ENCODE measurements at regions of chr1 and their contacts with region 1.

Region 1: DNA sequence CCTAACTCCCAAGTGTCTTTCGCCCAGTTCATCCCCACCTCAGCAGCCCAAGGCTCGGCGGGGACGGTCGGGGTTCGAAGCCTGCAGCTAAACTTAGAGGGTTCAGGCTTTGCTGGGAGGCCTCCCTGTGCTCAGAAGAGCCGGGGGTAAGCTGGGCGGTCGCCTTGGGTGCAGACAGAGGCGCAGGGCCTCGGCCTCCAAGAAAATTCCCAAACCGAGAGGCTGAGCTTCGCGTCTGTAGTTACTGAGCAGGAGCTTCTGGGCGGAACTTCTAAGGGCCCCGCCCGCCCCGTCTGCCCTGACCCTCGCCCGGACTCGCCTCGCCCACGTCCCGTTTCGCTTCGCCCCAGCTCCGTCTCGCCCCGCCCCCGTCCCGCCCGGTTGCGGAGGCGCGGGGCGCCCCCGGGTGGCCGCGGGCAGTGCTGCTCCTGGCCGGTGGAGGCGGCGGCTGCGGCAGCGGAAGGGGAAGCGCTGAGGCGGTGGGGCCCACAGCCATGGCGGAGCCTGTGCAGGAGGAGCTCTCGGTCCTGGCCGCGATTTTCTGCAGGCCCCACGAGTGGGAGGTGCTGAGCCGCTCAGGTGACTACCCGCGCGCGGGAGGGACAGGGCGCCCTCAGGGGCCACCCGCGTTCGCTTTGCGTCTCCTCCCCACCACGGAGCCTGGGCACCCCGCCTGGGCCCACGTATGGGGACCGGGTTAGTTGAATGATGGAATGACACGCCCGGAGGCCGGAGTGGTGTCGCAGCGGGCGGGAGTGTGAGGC is at the start of gene RWDD3:
- DNase-seq: peak; percentile 88 to 93 (median 91)
- H3K4me3 ChIP-seq: peak within 1 kb of the TSS; percentile 82
- H3K4me3 Mint-ChIP-seq: peak within 1 kb of the TSS; percentile 87 to 96 (median 89)
- H3K27ac ChIP-seq: peak within 1 kb of the TSS; percentile 68
- H3K27ac Mint-ChIP-seq: peak within 1 kb of the TSS; percentile 62 to 98 (median 89)
- H3K4me1 ChIP-seq: peaks cover 23% of the 10 kb centered on the region
- H3K4me1 Mint-ChIP-seq: peaks cover 37 to 52% (median 51%) of the 10 kb centered on the region in 3 donors
- H3K27me3 ChIP-seq: no peaks in the 10 kb centered on the region
- H3K27me3 Mint-ChIP-seq: peaks cover 0 to 23% of the 10 kb centered on the region in 2 donors
- total RNA-seq, gene RWDD3: 11.2 to 13.0 TPM

Region 2: GRCh38 chr1:95072532-95073419 is 161.1 kb before region 1 on chr1 and contains the start of gene ALG14:
- CTCF ChIA-PET with region 1: interaction called, 7 read pairs
- POLR2A ChIA-PET with region 1: interaction called, 16 read pairs
- DNase-seq: peak; percentile 88 to 95 (median 93)
- H3K4me3 ChIP-seq: peak within 1 kb of the TSS; percentile 88
- H3K4me3 Mint-ChIP-seq: peak within 1 kb of the TSS; percentile 92 to 100 (median 98)
- H3K27ac ChIP-seq: peak within 1 kb of the TSS; percentile 71
- H3K27ac Mint-ChIP-seq: peak within 1 kb of the TSS; percentile 92 to 99 (median 98)
- H3K4me1 ChIP-seq: peaks cover 16% of the 10 kb centered on the region
- H3K4me1 Mint-ChIP-seq: peaks cover 18 to 25% (median 23%) of the 10 kb centered on the region in 3 donors
- H3K27me3 ChIP-seq: no peaks in the 10 kb centered on the region
- H3K27me3 Mint-ChIP-seq: peaks cover 7 to 11% of the 10 kb centered on the region in 2 donors
- total RNA-seq, gene ALG14: 4.4 to 4.6 TPM

Region 3: DNA sequence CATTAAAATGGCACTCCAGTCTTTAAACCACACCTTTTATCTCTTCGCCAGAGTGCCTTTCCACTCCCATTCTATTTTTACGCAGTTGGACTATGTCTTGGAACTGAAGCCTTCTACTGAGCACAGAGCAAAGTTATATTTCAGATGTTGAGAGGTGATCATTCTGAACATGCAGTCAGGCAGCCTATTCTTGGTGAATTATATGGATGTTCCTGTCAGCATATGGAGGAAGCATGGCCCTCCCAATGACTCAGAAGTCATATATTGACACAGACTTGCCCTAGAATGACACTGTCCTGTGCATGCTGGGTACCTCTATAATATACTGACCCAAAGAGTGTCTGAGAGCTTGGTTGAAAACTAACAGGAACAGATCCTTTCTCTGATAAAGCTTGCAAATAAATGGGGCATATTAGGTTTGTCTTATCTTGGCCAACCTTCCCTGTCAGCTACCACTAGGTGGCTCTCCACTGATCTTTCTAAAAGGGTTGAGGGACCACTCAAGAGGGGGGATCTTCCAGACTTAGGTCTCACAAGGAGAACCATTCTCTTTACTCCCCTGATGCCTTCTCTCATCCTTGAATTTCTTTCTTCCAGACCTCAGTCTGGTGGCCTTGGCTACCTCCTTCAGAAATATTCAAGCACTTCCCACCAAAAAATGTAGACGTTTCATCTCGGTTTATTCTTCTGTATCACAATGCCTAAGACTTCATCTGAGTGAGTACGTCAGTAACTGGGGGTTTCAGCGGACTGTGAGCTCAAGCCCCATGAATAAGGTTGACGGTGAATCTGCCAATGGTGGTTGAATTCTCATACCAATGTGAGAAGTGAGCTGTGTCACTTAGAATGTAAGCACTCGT is 149.4 kb before region 1 on chr1:
- CTCF ChIA-PET with region 1: interaction called, 39 read pairs
- POLR2A ChIA-PET with region 1: interaction called, 8 read pairs
- DNase-seq: peak in 1 of 5 donors; percentile 33
- H3K4me3 ChIP-seq: no peak overlapping the region
- H3K4me3 Mint-ChIP-seq: no peak overlapping the region
- H3K27ac ChIP-seq: no peak overlapping the region
- H3K27ac Mint-ChIP-seq: no peak overlapping the region
- H3K4me1 ChIP-seq: no peaks in the 10 kb centered on the region
- H3K4me1 Mint-ChIP-seq: no peaks in the 10 kb centered on the region
- H3K27me3 ChIP-seq: no peaks in the 10 kb centered on the region
- H3K27me3 Mint-ChIP-seq: peaks cover 7 to 28% of the 10 kb centered on the region in 2 donors

Region 4: GRCh38 chr1:95116580-95117206 is 117.2 kb before region 1 on chr1:
- CTCF ChIA-PET with region 1: interaction called, 15 read pairs
- POLR2A ChIA-PET with region 1: interaction called, 3 read pairs
- DNase-seq: peak; percentile 6 to 68 (median 31)
- H3K4me3 ChIP-seq: peak overlapping the region; percentile 72
- H3K4me3 Mint-ChIP-seq: peak overlapping the region; percentile 84 to 94 (median 91)
- H3K27ac ChIP-seq: peak overlapping the region; percentile 65
- H3K27ac Mint-ChIP-seq: peak overlapping the region in 6 of 8 donors; percentile 22 to 88 (median 62)
- H3K4me1 ChIP-seq: peaks cover 4% of the 10 kb centered on the region
- H3K4me1 Mint-ChIP-seq: peaks cover 10 to 17% (median 13%) of the 10 kb centered on the region in 3 donors
- H3K27me3 ChIP-seq: peaks cover 10% of the 10 kb centered on the region
- H3K27me3 Mint-ChIP-seq: peaks cover 35 to 67% of the 10 kb centered on the region in 2 donors

Region 5: DNA sequence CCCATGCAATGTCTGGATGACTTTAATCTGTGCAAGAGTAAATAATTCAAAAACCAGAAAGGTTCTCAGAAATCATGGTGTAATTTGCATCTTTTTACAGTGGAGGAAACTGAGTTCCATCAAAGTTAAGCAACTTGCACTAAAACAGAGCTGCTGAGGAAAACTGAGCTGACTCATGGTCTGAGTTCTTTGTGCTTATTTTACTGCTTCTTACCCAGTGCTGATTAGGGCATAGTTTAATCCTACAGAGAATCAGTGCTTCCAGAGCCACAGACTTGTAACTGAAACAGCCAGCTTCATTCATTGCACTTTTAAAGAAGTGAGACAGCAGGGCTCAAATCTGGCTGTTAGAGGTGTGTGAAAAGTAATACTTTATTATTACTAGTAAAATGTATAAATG is 10.8 kb before region 1 on chr1:
- CTCF ChIA-PET with region 1: interaction called, 14 read pairs
- POLR2A ChIA-PET with region 1: no interaction called
- DNase-seq: no peak
- H3K4me3 ChIP-seq: no peak overlapping the region
- H3K4me3 Mint-ChIP-seq: no peak overlapping the region
- H3K27ac ChIP-seq: no peak overlapping the region
- H3K27ac Mint-ChIP-seq: no peak overlapping the region
- H3K4me1 ChIP-seq: no peaks in the 10 kb centered on the region
- H3K4me1 Mint-ChIP-seq: no peaks in the 10 kb centered on the region
- H3K27me3 ChIP-seq: no peaks in the 10 kb centered on the region
- H3K27me3 Mint-ChIP-seq: peaks cover 7 to 54% of the 10 kb centered on the region in 2 donors

Region 6: GRCh38 chr1:95247607-95248006 is 13.7 kb after region 1 on chr1:
- CTCF ChIA-PET with region 1: interaction called, 13 read pairs
- POLR2A ChIA-PET with region 1: interaction called, 5 read pairs
- DNase-seq: no peak
- H3K4me3 ChIP-seq: no peak overlapping the region
- H3K4me3 Mint-ChIP-seq: no peak overlapping the region
- H3K27ac ChIP-seq: no peak overlapping the region
- H3K27ac Mint-ChIP-seq: peak overlapping the region in 3 of 8 donors; percentile 38 to 45 (median 39)
- H3K4me1 ChIP-seq: no peaks in the 10 kb centered on the region
- H3K4me1 Mint-ChIP-seq: peaks cover 13 to 26% (median 26%) of the 10 kb centered on the region in 3 donors
- H3K27me3 ChIP-seq: no peaks in the 10 kb centered on the region
- H3K27me3 Mint-ChIP-seq: no peaks in the 10 kb centered on the region

Measured in CD8-positive, alpha-beta memory T cell (primary cell).